ENCODE measurements at regions of chr11 and their contacts with region 1.

Region 1: GRCh38 chr11:117946842-117947526 is 17.8 kb upstream of the TMPRSS13 start:
- DNase-seq: peak; percentile 73
- H3K4me3 Mint-ChIP-seq: peak overlapping the region; percentile 27
- H3K27ac Mint-ChIP-seq: peak overlapping the region; percentile 37
- H3K4me1 Mint-ChIP-seq: peaks cover 83% of the 10 kb centered on the region
- H3K27me3 Mint-ChIP-seq: no peaks in the 10 kb centered on the region

Region 2: DNA sequence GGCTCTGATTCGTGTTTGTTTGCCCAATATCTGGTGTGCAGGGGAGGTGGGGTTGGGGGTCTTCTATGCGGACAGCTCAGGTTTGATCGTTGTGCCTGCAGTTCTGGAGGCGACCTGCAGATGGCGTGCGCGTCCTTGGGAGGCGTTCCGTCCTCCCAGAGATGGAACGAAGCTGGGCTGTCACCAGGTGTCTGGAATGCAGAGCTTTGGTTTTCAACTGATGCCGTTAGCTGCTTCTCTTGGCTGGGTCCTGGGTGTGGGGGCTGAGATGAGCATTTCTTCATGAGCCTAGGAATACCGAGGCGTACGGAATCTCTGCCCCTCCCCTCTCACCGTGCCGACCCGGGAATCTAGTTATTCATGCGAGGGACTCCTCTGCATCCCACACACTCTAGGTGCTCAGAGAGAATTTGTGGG is 520.7 kb before region 1 on chr11:
- intact Hi-C with region 1: loop called (anchors 2 kb)
- DNase-seq: peak; percentile 44
- H3K4me3 Mint-ChIP-seq: no peak overlapping the region
- H3K27ac Mint-ChIP-seq: no peak overlapping the region
- H3K4me1 Mint-ChIP-seq: no peaks in the 10 kb centered on the region
- H3K27me3 Mint-ChIP-seq: peaks cover 3% of the 10 kb centered on the region

Region 3: GRCh38 chr11:117817368-117818040 is 129.5 kb before region 1 on chr11:
- intact Hi-C with region 1: loop called (anchors 1 kb)
- DNase-seq: peak; percentile 83
- H3K4me3 Mint-ChIP-seq: peak overlapping the region; percentile 70
- H3K27ac Mint-ChIP-seq: peak overlapping the region; percentile 98
- H3K4me1 Mint-ChIP-seq: peaks cover 79% of the 10 kb centered on the region
- H3K27me3 Mint-ChIP-seq: no peaks in the 10 kb centered on the region

Region 4: GRCh38 chr11:117907251-117907981 is 39.6 kb before region 1 on chr11:
- intact Hi-C with region 1: loop called (anchors 1 kb)
- DNase-seq: peak; percentile 68
- H3K4me3 Mint-ChIP-seq: peak overlapping the region; percentile 68
- H3K27ac Mint-ChIP-seq: peak overlapping the region; percentile 67
- H3K4me1 Mint-ChIP-seq: peaks cover 12% of the 10 kb centered on the region
- H3K27me3 Mint-ChIP-seq: no peaks in the 10 kb centered on the region

Region 5: GRCh38 chr11:117970400-117971024 is 23.5 kb after region 1 on chr11:
- intact Hi-C with region 1: loop called (anchors 1 kb)
- DNase-seq: peak; percentile 43
- H3K4me3 Mint-ChIP-seq: peak overlapping the region; percentile 57
- H3K27ac Mint-ChIP-seq: peak overlapping the region; percentile 83
- H3K4me1 Mint-ChIP-seq: peaks cover 66% of the 10 kb centered on the region
- H3K27me3 Mint-ChIP-seq: no peaks in the 10 kb centered on the region

Region 6: DNA sequence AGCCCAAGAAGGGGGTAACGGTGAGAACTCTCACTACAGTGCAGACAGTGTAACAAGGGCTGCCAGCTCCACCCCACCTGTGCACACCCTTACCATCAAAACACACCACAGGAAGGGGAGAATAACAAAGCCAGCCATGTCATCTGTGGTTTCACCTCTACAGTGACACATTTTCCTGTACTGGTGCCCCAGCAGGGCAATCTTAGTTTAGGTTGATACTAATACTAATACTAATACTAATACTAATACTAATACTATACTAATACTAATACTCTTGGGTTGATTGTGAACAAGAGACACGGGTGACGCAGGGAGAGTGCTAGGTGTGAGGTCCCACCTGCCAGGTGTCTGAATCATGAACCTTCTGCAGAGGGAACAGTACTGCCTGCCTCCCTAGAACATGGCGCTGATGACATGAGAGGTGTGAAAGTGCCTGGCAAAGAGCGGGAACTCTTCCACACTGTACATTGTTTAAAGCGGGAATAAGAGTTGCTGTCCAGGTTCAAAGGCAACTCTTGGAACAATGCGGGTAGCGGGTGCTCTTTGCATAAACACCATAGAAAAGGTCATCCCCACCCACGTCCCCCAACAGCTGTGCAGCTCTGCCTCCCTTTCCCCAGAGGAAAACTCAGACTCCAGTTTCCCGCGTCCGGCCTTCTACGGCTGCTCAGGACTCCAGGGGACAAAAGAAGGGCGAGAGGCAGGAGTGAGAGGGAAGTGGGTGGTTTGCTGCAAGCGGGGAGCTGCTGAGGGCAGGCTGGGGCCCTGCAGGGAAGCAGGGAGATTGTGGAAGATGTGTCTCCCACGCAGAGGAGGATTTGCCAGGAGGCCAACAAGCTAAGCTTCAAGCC is 104.9 kb after region 1 on chr11:
- intact Hi-C with region 1: loop called (anchors 1 kb)
- DNase-seq: peak; percentile 57
- H3K4me3 Mint-ChIP-seq: peak overlapping the region; percentile 69
- H3K27ac Mint-ChIP-seq: peak overlapping the region; percentile 93
- H3K4me1 Mint-ChIP-seq: peaks cover 64% of the 10 kb centered on the region
- H3K27me3 Mint-ChIP-seq: peaks cover 3% of the 10 kb centered on the region